ENCODE measurements at regions of chr2 and their contacts with region 1.

Region 1: DNA sequence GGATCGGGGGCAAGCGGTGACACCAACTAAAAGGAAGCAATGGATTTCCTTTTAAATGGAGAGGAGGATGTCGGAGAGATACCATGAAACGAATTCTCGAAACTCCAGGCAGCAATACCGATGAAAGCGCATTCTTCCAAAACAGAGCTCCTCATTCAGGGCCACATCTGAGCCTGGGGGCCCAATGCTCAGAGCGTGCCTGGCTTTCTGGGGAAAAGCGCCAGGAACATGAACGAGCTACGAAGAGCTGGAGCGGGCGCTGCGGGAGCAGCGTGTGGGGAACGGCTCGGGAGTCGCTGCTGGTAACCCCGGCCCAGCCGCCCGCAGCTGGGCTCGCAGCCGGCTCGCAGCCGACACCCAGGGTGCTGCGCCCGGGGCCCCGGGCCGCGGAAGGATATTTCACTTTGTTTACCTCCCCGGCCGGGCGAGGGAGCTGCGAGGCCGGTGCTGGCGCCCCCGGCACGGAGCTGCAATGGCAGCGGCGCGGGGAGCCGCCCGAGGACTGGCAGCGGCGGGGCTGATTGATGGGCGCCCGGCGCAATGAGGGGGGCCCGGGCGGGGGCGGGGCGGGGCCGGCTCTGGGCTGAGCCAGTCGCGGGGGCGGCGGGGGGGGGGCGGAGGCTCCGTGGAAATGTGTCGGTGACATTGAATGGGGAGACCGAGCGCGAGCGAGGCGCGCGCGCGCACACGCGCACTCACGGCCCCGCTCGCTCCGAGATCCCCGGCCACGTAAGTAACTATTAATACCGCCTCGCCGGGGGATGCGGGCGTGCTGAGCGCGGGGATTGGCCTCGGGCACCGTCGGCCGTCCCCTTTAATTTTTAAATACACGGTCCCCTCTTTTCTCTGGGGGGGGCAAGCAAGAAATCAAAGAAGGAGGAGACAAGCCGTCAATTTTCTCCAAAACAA is at the start of gene TRIB2:
- DNase-seq: peak; percentile 81
- H3K4me3 ChIP-seq: peak within 1 kb of the TSS; percentile 76 to 89 (median 87)
- H3K27ac ChIP-seq: peak within 1 kb of the TSS; percentile 83
- H3K4me1 ChIP-seq: peaks cover 36% of the 10 kb centered on the region
- H3K27me3 ChIP-seq: no peaks in the 10 kb centered on the region
- CTCF ChIP-seq: no peak
- total RNA-seq, gene TRIB2: 9.0 to 30.7 TPM

Region 2: GRCh38 chr2:11863513-11864328 is 852.8 kb before region 1 on chr2:
- CTCF ChIA-PET with region 1: no interaction called
- dilution Hi-C with region 1: no loop called
- in situ Hi-C with region 1: loop called in 1 of 2 experiments (anchors 10 kb)
- intact Hi-C with region 1: loop called (anchors 1 kb)
- DNase-seq: peak; percentile 77
- H3K4me3 ChIP-seq: no peak overlapping the region
- H3K27ac ChIP-seq: no peak overlapping the region
- H3K4me1 ChIP-seq: peaks cover 15% of the 10 kb centered on the region
- H3K27me3 ChIP-seq: no peaks in the 10 kb centered on the region
- CTCF ChIP-seq: peak; percentile 88 to 98

Region 3: DNA sequence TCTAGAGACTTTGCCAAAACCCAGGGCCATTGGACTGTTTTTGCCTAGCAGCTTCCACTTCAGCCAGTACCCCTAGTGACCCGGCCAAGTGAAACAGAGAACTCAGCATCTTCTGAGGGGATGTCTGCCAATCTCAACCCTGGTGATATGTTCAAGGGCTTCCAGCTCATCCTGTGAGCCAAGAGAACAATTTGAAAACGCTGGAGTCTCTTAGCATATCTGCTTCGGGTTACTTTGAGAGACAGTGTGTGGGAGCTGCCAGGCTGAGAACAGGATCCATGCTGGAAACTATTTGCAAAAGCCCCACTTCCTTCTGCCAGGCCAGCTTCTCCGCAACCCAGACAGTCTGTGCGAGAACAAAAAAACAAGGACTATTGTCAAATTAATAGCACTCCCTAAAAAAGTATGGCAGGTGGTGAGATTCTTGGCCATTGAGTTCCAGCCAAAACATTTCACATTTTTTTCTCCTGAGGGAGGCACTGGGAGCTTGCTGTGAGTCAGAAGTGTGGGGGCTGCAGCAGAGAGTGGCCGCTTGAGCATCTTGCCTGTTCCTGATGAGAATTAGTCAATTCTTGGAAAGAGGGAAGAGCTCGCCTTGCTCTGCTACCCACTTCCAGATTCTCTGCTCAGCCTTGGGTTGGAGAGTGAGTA is 395.4 kb before region 1 on chr2:
- CTCF ChIA-PET with region 1: no interaction called
- dilution Hi-C with region 1: no loop called
- in situ Hi-C with region 1: loop called in 1 of 2 experiments (anchors 25 kb)
- intact Hi-C with region 1: loop called (anchors 2 kb)
- DNase-seq: peak; percentile 87
- H3K4me3 ChIP-seq: no peak overlapping the region
- H3K27ac ChIP-seq: peak overlapping the region; percentile 48
- H3K4me1 ChIP-seq: peaks cover 57% of the 10 kb centered on the region
- H3K27me3 ChIP-seq: no peaks in the 10 kb centered on the region
- CTCF ChIP-seq: no peak

Region 4: GRCh38 chr2:12430407-12431133 is 286.0 kb before region 1 on chr2:
- CTCF ChIA-PET with region 1: interaction called, 9 read pairs
- dilution Hi-C with region 1: no loop called
- in situ Hi-C with region 1: loop called in 1 of 2 experiments (anchors 10 kb)
- intact Hi-C with region 1: loop called (anchors 1 kb)
- DNase-seq: no peak
- H3K4me3 ChIP-seq: no peak overlapping the region
- H3K27ac ChIP-seq: no peak overlapping the region
- H3K4me1 ChIP-seq: no peaks in the 10 kb centered on the region
- H3K27me3 ChIP-seq: no peaks in the 10 kb centered on the region
- CTCF ChIP-seq: no peak

Region 5: GRCh38 chr2:12555012-12555645 is 161.4 kb before region 1 on chr2:
- CTCF ChIA-PET with region 1: no interaction called
- dilution Hi-C with region 1: no loop called
- in situ Hi-C with region 1: no loop called
- intact Hi-C with region 1: loop called (anchors 1 kb)
- DNase-seq: peak; percentile 63
- H3K4me3 ChIP-seq: no peak overlapping the region
- H3K27ac ChIP-seq: peak overlapping the region; percentile 3
- H3K4me1 ChIP-seq: peaks cover 24% of the 10 kb centered on the region
- H3K27me3 ChIP-seq: no peaks in the 10 kb centered on the region
- CTCF ChIP-seq: peak in 1 of 2 donors; percentile 26

Region 6: DNA sequence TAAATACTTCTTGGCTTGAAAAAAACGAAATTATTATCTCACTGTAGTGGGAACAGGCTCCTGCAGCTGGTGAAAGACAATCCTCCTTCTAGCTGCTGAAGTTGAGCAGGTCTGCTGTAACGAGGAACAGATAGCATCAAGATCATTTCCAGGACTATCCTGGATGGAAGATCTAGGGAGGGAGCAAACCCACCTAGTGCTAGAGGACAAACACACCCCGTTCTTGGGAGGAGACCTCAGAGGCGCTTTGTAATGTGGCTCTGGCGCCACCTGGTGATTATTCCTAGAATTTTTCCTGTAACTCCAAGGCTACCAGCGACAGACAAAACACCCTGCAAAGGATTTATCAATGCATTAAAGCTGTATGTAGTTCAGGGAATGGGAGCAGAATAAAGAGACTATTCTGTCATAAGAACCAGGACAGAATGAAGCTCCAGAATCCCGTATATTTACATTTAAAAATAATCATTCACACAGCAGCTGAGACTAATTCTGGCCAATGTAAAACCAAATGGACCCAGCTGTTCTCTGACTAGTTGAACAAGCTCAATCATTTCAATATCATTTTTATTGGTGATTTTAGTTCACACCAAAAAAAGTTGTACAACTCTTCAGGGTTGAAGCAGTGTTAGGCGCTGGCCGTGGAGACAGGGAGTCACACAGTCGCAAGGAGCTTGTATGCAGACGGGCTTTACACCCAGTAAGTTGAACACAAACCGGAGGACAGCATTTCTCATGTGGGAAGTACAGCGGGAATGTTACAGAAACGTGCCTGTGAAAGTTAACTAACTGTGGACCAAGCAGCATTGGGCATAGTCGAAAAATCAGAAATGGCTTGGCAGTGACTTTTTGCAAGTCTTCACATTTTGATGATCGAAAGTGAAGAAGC is 290.5 kb after region 1 on chr2:
- CTCF ChIA-PET with region 1: interaction called, 10 read pairs
- dilution Hi-C with region 1: no loop called
- in situ Hi-C with region 1: loop called in 1 of 2 experiments (anchors 10 kb)
- intact Hi-C with region 1: loop called (anchors 1 kb)
- DNase-seq: peak; percentile 40
- H3K4me3 ChIP-seq: peak overlapping the region; percentile 14 to 31 (median 28)
- H3K27ac ChIP-seq: no peak overlapping the region
- H3K4me1 ChIP-seq: peaks cover 30% of the 10 kb centered on the region
- H3K27me3 ChIP-seq: no peaks in the 10 kb centered on the region
- CTCF ChIP-seq: peak; percentile 63 to 81